Activated CD4-positive, alpha-beta memory T cell treated with anti-CD3 and anti-CD28 coated beads for 36 hours (primary cell): ENCODE measurements at regions of chr9 and their contacts with region 1.

Region 1: DNA sequence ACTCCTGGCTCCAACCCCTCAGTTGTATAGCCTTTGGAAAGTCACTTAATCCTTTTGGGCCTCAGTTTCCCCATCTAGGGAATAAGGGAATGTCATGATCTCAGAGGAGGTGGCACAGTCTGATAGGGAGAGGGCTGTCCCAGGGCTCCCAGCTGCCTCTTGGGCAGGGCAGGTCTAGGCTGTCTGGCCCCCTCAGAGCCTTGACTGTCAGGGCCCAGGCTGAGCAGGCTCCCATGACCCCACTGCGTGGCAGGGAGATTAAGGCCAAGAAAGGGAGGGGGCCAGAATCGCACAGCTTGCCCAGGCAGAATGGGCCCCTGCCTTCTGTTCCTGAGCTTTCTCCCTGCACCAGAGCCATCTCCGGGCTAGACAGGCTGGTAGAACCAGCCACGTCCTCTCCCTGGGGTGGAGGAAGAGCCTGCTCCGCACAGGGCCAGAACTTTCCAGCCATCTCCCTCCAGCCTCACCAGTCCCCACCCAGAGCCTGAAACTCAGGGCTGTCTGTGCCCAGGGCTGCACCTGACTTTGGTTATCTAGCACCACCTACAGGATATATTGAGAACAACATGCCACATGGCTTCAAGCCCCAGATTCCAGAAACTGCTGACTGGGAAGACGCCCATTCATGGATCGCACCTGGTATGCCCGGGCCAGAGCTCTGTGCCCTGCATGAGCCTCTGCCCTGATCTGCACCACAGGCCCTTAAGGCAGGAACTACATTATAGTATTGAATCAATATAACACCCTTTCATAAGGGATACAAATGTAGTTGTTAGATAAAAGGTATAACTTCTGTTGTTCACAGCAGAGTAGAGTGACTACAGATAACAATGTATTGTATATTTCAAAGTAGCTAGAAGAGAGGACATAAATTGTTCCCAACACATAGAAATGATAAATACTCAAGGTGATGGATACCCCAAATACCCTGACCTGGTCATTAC is 32.0 kb downstream of the NAIF1 start:
- DNase-seq: peak; percentile 75
- H3K4me3 Mint-ChIP-seq: peak overlapping the region; percentile 35
- H3K27ac Mint-ChIP-seq: peak overlapping the region; percentile 23
- H3K4me1 Mint-ChIP-seq: peaks cover 38% of the 10 kb centered on the region
- H3K27me3 Mint-ChIP-seq: peaks cover 2% of the 10 kb centered on the region

Region 2: DNA sequence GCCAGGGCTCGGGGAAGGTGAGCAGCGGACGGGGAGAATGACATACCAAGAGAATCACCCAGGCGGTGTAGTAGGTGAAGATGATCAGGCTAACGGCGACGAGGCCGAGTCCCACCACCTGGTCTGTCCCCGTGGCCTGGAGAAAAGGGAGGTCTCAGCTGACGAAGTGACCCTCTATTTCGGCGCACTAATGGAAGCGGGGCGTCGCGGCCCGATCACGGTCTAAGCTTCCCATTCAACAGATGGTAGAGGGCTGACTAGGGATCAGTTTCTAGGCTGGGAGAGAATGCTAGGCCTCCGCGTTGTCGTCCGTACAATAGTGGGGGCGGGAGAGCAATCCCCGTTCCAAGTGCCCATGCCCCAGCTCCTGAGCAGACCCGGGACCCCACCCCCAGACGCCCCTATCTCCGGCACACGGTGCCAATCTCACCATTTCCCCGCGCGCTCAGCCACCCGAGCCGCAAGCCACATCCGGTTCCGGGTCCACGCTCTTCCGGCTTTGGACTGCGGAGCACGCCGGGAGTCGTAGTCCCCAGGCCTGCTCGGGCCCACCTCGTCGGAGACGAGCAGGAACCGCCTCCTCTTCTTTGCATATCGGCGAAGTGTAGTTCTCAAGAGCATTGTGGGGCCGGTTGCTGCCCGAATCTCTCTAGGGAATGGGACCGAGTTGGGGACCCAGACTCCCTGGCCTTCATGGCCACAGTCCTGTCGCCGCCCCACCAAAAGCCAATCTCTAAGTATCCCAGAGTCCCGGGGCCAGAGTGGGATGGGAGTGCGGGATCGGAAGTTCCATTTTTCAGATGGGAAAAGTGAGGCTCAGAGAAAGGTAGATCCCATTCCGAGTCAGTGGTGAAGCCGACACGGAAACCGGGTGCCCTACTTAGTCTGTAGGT is 97.5 kb before region 1 on chr9 and contains the start of gene DPM2:
- CTCF ChIA-PET with region 1: interaction called, 347 read pairs
- POLR2A ChIA-PET with region 1: interaction called, 3 read pairs
- intact Hi-C with region 1: no loop called
- DNase-seq: peak; percentile 91
- H3K4me3 Mint-ChIP-seq: peak within 1 kb of the TSS; percentile 90
- H3K27ac Mint-ChIP-seq: peak within 1 kb of the TSS; percentile 89
- H3K4me1 Mint-ChIP-seq: peaks cover 43% of the 10 kb centered on the region
- H3K27me3 Mint-ChIP-seq: no peaks in the 10 kb centered on the region
- total RNA-seq, gene DPM2: 41.5 to 42.0 TPM

Region 3: GRCh38 chr9:127960410-127961154 is 74.5 kb before region 1 on chr9:
- CTCF ChIA-PET with region 1: interaction called, 142 read pairs
- POLR2A ChIA-PET with region 1: interaction called, 3 read pairs
- intact Hi-C with region 1: loop called (anchors 1 kb)
- DNase-seq: no peak
- H3K4me3 Mint-ChIP-seq: no peak overlapping the region
- H3K27ac Mint-ChIP-seq: peak overlapping the region; percentile 87
- H3K4me1 Mint-ChIP-seq: peaks cover 89% of the 10 kb centered on the region
- H3K27me3 Mint-ChIP-seq: no peaks in the 10 kb centered on the region

Region 4: DNA sequence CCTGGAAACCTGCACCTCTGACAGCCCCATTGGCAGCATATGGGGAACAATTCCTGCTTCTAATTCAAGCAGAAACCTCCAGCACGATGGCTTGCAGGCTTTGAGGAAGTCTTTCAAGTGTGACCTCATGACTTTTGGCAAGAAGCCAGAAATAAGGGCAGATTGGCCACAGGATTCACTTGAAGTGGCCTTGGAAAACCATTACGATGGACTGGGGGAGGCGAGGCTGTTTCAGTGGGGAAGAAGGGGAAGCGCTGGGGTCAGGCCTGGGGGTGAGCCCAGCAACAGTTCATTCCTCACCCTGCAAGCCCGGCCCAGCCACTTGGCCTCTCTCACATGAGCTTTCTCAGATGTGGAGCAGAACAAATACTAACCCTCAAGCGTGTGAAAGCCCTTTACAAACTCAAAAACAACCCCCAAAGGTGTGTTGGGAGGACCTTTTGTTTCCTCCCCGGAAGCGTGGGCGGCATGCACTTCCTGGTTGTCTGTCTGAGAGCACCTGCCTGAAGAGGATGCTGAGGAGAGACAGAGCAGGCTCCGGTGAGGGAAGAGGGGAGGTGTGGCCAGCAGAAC is 27.4 kb before region 1 on chr9:
- CTCF ChIA-PET with region 1: interaction called, 20 read pairs
- POLR2A ChIA-PET with region 1: no interaction called
- intact Hi-C with region 1: loop called (anchors 1 kb)
- DNase-seq: peak; percentile 94
- H3K4me3 Mint-ChIP-seq: peak overlapping the region; percentile 80
- H3K27ac Mint-ChIP-seq: peak overlapping the region; percentile 92
- H3K4me1 Mint-ChIP-seq: peaks cover 43% of the 10 kb centered on the region
- H3K27me3 Mint-ChIP-seq: no peaks in the 10 kb centered on the region

Region 5: DNA sequence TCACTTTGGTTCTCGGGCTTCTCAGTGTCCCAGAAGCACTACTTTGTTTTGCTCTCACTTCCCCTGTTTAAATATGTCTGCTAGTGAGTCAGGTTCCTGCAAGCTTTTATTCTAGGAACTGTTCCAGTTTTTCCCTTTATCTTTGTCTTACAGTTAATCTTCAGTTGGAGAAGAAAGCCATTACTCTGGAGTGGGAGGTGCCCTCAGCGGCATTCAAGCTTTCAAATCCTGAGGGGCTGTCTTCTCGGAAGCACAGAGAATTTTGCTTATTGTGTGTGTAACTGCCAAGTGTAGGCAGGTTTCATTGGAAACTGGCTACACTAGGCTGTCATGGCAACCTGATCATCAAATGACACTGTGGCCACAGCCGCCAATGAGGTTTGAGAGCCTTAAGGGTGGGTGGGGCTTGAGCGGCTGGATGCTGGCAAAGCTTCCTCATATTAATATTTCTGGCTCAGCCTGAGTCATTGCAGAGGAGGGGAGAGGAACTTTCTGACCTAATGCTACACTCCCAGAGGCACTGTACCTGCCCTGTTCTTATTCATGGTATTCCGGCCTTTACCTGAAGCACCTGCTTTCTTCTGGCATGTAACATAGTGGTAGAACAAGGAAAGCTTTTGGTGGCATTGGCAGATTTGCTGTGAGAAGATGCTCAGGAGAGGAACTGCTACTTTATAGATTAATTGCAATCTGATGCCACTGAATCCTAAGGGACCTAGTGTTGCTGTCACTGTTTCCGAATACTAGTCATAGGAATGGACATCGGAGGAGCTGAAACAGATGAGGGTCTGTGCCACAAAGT is 59.3 kb after region 1 on chr9:
- CTCF ChIA-PET with region 1: interaction called, 23 read pairs
- POLR2A ChIA-PET with region 1: no interaction called
- intact Hi-C with region 1: no loop called
- DNase-seq: peak; percentile 93
- H3K4me3 Mint-ChIP-seq: peak overlapping the region; percentile 54
- H3K27ac Mint-ChIP-seq: peak overlapping the region; percentile 96
- H3K4me1 Mint-ChIP-seq: peaks cover 84% of the 10 kb centered on the region
- H3K27me3 Mint-ChIP-seq: no peaks in the 10 kb centered on the region